ENCODE measurements at regions of chr7 and their contacts with region 1.

Region 1: GRCh38 chr7:43758029-43758821 is at the start of gene BLVRA:
- DNase-seq: peak; percentile 76
- H3K4me3 Mint-ChIP-seq: peak within 1 kb of the TSS; percentile 88
- H3K27ac Mint-ChIP-seq: peak within 1 kb of the TSS; percentile 49
- H3K4me1 Mint-ChIP-seq: peaks cover 34% of the 10 kb centered on the region
- H3K27me3 Mint-ChIP-seq: peaks cover 3% of the 10 kb centered on the region
- total RNA-seq, gene BLVRA: 48.1 and 52.9 TPM in 2 replicates

Region 2: DNA sequence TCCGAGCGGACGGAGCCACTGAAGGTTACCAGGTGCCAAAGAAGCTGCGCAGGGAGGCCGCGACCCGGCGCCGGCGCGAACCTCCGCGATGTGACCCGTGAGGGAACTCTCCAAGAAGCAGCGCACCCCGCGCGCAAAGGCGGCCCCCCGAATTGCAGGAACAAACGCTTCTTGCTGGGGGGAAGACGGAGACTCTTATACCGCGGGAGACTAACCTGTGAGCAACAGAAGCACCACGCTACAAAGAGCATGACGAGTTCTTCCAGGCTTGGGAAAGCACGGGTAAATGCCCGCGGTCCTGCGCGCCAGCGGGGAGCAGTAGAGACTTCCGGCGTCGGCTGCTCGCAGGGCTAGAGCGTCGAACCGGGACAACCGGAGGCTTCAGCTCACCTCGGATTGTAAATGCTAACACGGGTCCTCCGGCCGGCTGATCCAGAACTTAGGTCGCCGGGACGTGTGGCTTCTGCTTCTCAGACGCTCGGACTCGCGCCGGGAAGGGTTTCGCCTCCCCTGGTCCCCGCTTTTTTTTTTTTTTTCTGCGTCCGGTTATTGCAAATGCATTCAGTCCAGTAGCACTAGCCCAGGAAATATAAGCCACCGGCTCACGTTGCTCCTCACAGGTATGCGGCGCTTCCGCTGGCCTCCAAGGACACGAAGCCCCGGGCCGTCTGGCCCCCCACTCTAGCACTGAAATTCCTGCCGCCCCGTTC is 28.9 kb before region 1 on chr7 and contains the start of gene COA1:
- intact Hi-C with region 1: loop called (anchors 1 kb)
- DNase-seq: peak; percentile 76
- H3K4me3 Mint-ChIP-seq: peak within 1 kb of the TSS; percentile 88
- H3K27ac Mint-ChIP-seq: peak within 1 kb of the TSS; percentile 76
- H3K4me1 Mint-ChIP-seq: peaks cover 28% of the 10 kb centered on the region
- H3K27me3 Mint-ChIP-seq: peaks cover 3% of the 10 kb centered on the region
- total RNA-seq, gene COA1: 81.7 and 88.6 TPM in 2 replicates

Region 3: DNA sequence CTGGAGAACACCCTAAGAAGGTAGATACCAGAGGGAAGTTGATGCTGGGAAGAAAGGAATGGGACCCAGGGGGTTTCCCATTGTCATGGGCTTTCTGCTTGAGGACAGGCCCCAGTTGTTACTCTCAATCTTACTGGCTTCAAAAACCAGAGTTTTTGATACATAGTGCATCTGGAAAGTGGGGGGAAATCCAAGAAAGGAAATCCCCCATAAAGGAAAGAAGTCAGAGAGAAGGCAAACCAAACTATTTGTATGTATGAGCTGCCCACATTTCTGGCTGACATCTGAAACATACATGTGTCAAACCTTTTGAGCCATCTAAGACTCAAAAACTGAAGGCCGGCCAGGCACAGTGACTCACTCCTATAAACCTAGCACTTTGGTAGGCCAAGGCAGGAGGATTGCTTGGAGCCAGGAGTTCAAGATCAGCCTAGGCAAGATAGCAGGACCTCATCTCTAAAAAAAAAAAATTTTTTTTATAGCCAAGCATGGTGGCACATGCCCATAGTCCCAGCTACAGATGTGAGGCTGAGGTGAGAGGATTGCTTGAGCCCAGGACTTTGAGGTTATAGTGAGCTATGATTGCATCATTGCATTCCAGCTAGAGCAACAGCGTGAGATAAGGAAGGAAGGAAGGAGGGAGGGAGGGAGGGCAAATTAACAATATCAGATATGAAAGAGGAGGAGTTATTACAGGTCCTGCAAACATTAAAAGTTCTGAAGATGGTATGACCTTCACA is 22.3 kb before region 1 on chr7:
- intact Hi-C with region 1: loop called (anchors 1 kb)
- DNase-seq: no peak
- H3K4me3 Mint-ChIP-seq: no peak overlapping the region
- H3K27ac Mint-ChIP-seq: peak overlapping the region; percentile 53
- H3K4me1 Mint-ChIP-seq: peaks cover 24% of the 10 kb centered on the region
- H3K27me3 Mint-ChIP-seq: peaks cover 3% of the 10 kb centered on the region

Region 4: GRCh38 chr7:43784030-43785001 is 26.1 kb after region 1 on chr7:
- intact Hi-C with region 1: loop called (anchors 2 kb)
- DNase-seq: no peak
- H3K4me3 Mint-ChIP-seq: no peak overlapping the region
- H3K27ac Mint-ChIP-seq: peak overlapping the region; percentile 32
- H3K4me1 Mint-ChIP-seq: peaks cover 9% of the 10 kb centered on the region
- H3K27me3 Mint-ChIP-seq: no peaks in the 10 kb centered on the region

Region 5: GRCh38 chr7:44123190-44124003 is 365.2 kb after region 1 on chr7 and contains the start of gene POLD2:
- intact Hi-C with region 1: no loop called
- DNase-seq: peak; percentile 98
- H3K4me3 Mint-ChIP-seq: peak within 1 kb of the TSS; percentile 96
- H3K27ac Mint-ChIP-seq: peak within 1 kb of the TSS; percentile 90
- H3K4me1 Mint-ChIP-seq: peaks cover 31% of the 10 kb centered on the region
- H3K27me3 Mint-ChIP-seq: peaks cover 7% of the 10 kb centered on the region
- total RNA-seq, gene POLD2: 234 and 250 TPM in 2 replicates

Region 6: DNA sequence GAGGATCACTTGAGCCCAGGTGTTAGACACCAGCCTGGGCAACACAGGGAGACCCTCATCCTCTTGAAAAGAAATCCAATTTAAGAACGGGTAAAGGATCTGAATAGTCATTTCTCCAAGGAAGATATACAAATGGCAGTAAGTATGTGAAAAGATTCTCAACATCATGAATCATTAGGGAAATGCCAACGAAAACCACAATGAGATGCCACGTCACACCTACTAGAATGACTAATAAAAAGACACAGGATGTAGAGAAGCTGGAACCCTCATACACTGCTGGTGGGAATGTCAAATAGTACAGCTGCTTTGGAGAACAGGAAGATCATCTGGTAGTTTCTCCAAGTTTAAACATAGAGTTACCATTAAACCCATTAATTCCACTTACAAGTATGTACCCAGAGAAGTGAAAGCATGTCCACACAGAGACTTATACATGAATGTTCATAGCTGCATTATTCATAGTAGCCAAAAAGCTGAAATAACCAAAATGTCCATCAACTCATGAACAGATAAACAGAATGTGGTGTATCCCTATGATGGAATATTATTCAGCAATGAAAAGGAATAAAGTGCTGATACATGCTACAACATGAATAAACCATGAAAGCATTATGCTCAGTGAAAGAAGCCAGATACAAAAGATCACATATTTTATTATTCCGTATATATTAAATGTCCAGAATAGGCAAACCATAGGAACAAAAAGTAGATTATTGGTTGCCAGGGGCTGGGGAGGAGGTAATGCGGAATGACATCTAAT is 977.4 kb after region 1 on chr7:
- intact Hi-C with region 1: loop called (anchors 5 kb)
- DNase-seq: peak; percentile 42
- H3K4me3 Mint-ChIP-seq: peak overlapping the region; percentile 50
- H3K27ac Mint-ChIP-seq: peak overlapping the region; percentile 89
- H3K4me1 Mint-ChIP-seq: peaks cover 29% of the 10 kb centered on the region
- H3K27me3 Mint-ChIP-seq: peaks cover 2% of the 10 kb centered on the region